Testis (tissue), 5 donors: ENCODE measurements at regions of chr1 and their contacts with region 1.

Region 1: DNA sequence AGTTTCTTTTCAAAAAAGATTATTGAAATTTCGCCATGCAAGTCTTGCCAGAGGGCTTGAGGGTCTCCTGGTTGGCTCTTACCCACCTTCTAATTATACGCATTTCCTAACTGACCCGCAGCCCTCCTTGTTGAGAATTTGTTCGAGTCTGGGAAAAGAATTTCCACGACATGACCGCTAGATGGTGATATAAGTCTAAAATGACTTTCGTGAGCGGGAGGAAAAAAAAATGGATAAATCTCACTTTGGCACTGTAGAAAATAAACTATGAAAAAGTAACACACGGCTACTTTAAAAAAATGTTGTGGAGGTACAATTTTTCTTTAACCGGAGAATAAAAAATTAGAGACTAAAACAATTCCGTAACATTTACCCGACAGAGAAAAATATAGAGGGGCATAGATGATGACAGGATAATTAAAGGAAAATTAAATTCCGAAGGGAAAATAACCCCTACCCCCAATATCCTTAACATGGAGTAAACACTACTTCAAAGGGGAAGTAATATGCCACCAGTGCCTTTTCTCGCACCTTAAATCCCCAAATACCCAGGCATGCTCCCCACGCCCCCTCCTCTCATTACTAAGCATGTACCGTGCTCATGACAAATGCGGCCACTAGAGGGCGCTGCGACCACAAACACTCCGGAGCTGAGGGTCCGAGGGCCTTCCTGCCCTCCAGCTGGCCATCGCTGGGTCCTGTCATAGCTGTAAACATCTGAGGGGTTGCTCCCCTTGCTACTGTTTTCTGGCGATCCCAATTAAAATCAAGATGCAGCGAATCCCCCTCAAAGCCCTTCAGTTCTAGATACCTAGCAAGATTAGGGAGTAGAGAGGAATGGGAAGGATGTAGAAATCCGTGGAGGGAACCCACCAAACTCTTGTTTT is 266.9 kb downstream of the ASTN1 start:
- DNase-seq: peak; percentile 90
- H3K4me3 ChIP-seq: no peak overlapping the region
- H3K27ac ChIP-seq: no peak overlapping the region
- H3K4me1 ChIP-seq: peaks cover 4% of the 10 kb centered on the region
- H3K27me3 ChIP-seq: no peaks in the 10 kb centered on the region
- CTCF ChIP-seq: peak; percentile 67 to 88 (median 82)
- POLR2A ChIP-seq: no peak

Region 2: GRCh38 chr1:176701151-176701866 is 196.3 kb before region 1 on chr1:
- intact Hi-C with region 1: no loop called
- DNase-seq: no peak
- H3K4me3 ChIP-seq: no peak overlapping the region
- H3K27ac ChIP-seq: no peak overlapping the region
- H3K4me1 ChIP-seq: no peaks in the 10 kb centered on the region
- H3K27me3 ChIP-seq: no peaks in the 10 kb centered on the region
- CTCF ChIP-seq: no peak
- POLR2A ChIP-seq: no peak

Region 3: GRCh38 chr1:177170756-177171535 is 273.4 kb after region 1 on chr1 and contains the start of gene BRINP2:
- intact Hi-C with region 1: loop called (anchors 10 kb)
- DNase-seq: peak; percentile 66
- H3K4me3 ChIP-seq: peak within 1 kb of the TSS; percentile 22 to 34
- H3K27ac ChIP-seq: no peak within 1 kb of the TSS
- H3K4me1 ChIP-seq: no peaks in the 10 kb centered on the region
- H3K27me3 ChIP-seq: no peaks in the 10 kb centered on the region
- CTCF ChIP-seq: no peak
- POLR2A ChIP-seq: no peak
- total RNA-seq, gene BRINP2: 5.9 to 6.1 TPM

Region 4: GRCh38 chr1:177206831-177207355 is 309.3 kb after region 1 on chr1:
- intact Hi-C with region 1: no loop called
- DNase-seq: no peak
- H3K4me3 ChIP-seq: no peak overlapping the region
- H3K27ac ChIP-seq: no peak overlapping the region
- H3K4me1 ChIP-seq: peaks cover 13% of the 10 kb centered on the region
- H3K27me3 ChIP-seq: no peaks in the 10 kb centered on the region
- CTCF ChIP-seq: no peak
- POLR2A ChIP-seq: no peak

Region 5: GRCh38 chr1:177948336-177948972 is 1050.9 kb after region 1 on chr1:
- intact Hi-C with region 1: loop called (anchors 10 kb)
- DNase-seq: peak; percentile 71
- H3K4me3 ChIP-seq: no peak overlapping the region
- H3K27ac ChIP-seq: no peak overlapping the region
- H3K4me1 ChIP-seq: peaks cover 6% of the 10 kb centered on the region
- H3K27me3 ChIP-seq: no peaks in the 10 kb centered on the region
- CTCF ChIP-seq: peak; percentile 74 to 93 (median 89)
- POLR2A ChIP-seq: no peak